ENCODE measurements at regions of chr7 and their contacts with region 1.

Region 1: DNA sequence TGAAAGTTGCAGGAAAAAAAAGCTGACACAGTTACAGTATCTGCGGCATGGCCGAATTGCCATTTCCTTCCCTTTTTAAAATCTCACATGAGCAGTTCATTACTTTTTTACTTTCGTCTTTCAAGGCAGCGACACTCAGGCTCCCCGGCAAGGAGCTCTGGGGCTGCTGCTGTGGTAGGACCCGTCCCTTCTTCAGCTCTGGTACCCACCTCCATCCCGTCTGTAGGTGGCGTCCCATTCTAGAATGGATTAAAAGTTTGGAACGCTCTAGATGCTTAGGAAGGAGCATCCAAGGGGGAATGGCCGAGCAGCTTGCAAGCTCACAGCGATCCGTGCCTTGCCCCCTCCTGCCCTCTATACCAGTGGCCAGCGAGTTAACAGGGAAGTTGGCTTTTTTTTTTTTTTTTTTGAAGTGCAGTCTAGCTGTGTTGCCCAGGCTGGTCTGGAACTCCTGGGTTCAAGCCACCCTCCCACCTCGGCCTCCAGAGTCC is 22.8 kb upstream of the TTYH3 start:
- DNase-seq: no peak
- ATAC-seq: peak; percentile 74
- H3K4me3 ChIP-seq: no peak overlapping the region
- H3K27ac ChIP-seq: no peak overlapping the region
- H3K4me1 ChIP-seq: peaks cover 10% of the 10 kb centered on the region
- H3K27me3 ChIP-seq: no peaks in the 10 kb centered on the region
- CTCF ChIP-seq: peak; percentile 38 to 44 (median 41)
- EP300 ChIP-seq: no peak
- POLR2A ChIP-seq: no peak
- RAD21 ChIP-seq: peak; percentile 26; the same call in 1 of the 2 replicates

Region 2: GRCh38 chr7:2460188-2460587 is 148.8 kb before region 1 on chr7:
- CTCF ChIA-PET with region 1: no interaction called
- POLR2A ChIA-PET with region 1: no interaction called
- RAD21 ChIA-PET with region 1: no interaction called
- SMC1A ChIA-PET with region 1: no interaction called
- in situ Hi-C with region 1: no loop called
- intact Hi-C with region 1: no loop called
- DNase-seq: no peak
- ATAC-seq: no peak
- H3K4me3 ChIP-seq: no peak overlapping the region
- H3K27ac ChIP-seq: no peak overlapping the region
- H3K4me1 ChIP-seq: no peaks in the 10 kb centered on the region
- H3K27me3 ChIP-seq: no peaks in the 10 kb centered on the region
- CTCF ChIP-seq: no peak
- EP300 ChIP-seq: no peak
- POLR2A ChIP-seq: no peak
- RAD21 ChIP-seq: no peak

Region 3: DNA sequence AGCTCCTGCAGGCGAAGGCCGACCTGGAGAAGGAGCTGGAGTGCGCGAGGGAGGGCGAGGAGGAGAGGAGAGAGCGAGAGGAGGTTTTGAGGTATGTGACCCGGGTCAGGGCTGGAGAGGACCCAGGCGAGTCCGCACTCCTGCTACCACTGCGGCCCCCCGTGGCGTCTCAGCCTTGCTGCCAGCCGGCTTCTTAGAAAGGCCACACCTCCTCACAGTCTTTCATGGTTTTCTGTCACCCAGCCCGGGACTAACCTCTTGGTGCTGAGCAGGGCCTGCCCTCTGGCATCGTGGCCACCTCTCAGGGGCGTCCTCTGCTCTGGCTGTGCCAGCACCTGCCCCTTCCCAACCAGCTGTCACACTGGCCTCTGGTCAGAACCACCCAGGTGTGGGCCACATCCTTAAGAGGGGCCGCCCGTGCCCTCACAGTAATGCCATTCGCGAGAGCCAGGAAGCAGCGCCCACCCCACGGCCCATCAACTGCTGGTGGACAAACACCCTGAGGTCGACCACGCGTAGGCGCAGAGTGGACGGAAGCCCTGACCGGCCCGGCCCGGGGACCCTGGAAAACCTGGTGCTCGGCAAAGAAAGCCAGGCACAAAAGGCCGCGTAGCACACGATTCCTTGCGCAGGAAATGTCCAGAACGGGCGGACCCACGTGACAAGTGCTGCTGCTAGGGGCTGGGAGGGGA is 15.8 kb before region 1 on chr7:
- CTCF ChIA-PET with region 1: no interaction called
- POLR2A ChIA-PET with region 1: no interaction called
- RAD21 ChIA-PET with region 1: no interaction called
- SMC1A ChIA-PET with region 1: no interaction called
- in situ Hi-C with region 1: no loop called
- intact Hi-C with region 1: no loop called
- DNase-seq: no peak
- ATAC-seq: no peak
- H3K4me3 ChIP-seq: no peak overlapping the region
- H3K27ac ChIP-seq: no peak overlapping the region
- H3K4me1 ChIP-seq: no peaks in the 10 kb centered on the region
- H3K27me3 ChIP-seq: no peaks in the 10 kb centered on the region
- CTCF ChIP-seq: no peak
- EP300 ChIP-seq: no peak
- POLR2A ChIP-seq: no peak
- RAD21 ChIP-seq: no peak

Region 4: GRCh38 chr7:2651336-2651735 is 42.4 kb after region 1 on chr7:
- CTCF ChIA-PET with region 1: interaction called, 11 read pairs
- POLR2A ChIA-PET with region 1: no interaction called
- RAD21 ChIA-PET with region 1: interaction called, 4 read pairs
- SMC1A ChIA-PET with region 1: interaction called, 3 read pairs
- in situ Hi-C with region 1: no loop called
- intact Hi-C with region 1: no loop called
- DNase-seq: no peak
- ATAC-seq: peak; percentile 77
- H3K4me3 ChIP-seq: no peak overlapping the region
- H3K27ac ChIP-seq: no peak overlapping the region
- H3K4me1 ChIP-seq: no peaks in the 10 kb centered on the region
- H3K27me3 ChIP-seq: no peaks in the 10 kb centered on the region
- CTCF ChIP-seq: peak in 2 of 3 experiments; percentile 30 to 31; a peak in 2 of 6 replicates
- EP300 ChIP-seq: no peak
- POLR2A ChIP-seq: no peak
- RAD21 ChIP-seq: no peak